Astrocyte of the cerebellum (primary cell): ENCODE measurements at regions of chr19 and their contacts with region 1.

Region 1: GRCh38 chr19:8858260-8858659 is 26.1 kb downstream of the MBD3L1 start:
- DNase-seq: no peak
- H3K4me3 ChIP-seq: no peak overlapping the region
- CTCF ChIP-seq: no peak

Region 2: GRCh38 chr19:8697671-8698432 is 160.4 kb before region 1 on chr19:
- in situ Hi-C with region 1: loop called (anchors 25 kb)
- DNase-seq: no peak
- H3K4me3 ChIP-seq: no peak overlapping the region
- CTCF ChIP-seq: no peak

Region 3: GRCh38 chr19:9115307-9115813 is 257.1 kb after region 1 on chr19 and contains the start of gene OR7G1:
- in situ Hi-C with region 1: loop called (anchors 25 kb)
- DNase-seq: no peak
- H3K4me3 ChIP-seq: no peak within 1 kb of the TSS
- CTCF ChIP-seq: no peak